ENCODE measurements at regions of chr10 and their contacts with region 1.

Region 1: GRCh38 chr10:51960494-51960895 is 261.1 kb upstream of the CSTF2T start:
- DNase-seq: no peak
- H3K4me3 ChIP-seq: no peak overlapping the region
- H3K27ac ChIP-seq: no peak overlapping the region
- H3K4me1 ChIP-seq: no peaks in the 10 kb centered on the region
- H3K27me3 ChIP-seq: no peaks in the 10 kb centered on the region
- CTCF ChIP-seq: peak; percentile 77

Region 2: GRCh38 chr10:51010977-51011376 is 949.5 kb before region 1 on chr10:
- CTCF ChIA-PET with region 1: no interaction called
- POLR2A ChIA-PET with region 1: interaction called, 13 read pairs
- intact Hi-C with region 1: no loop called
- DNase-seq: no peak
- H3K4me3 ChIP-seq: no peak overlapping the region
- H3K27ac ChIP-seq: no peak overlapping the region
- H3K4me1 ChIP-seq: no peaks in the 10 kb centered on the region
- H3K27me3 ChIP-seq: no peaks in the 10 kb centered on the region
- CTCF ChIP-seq: peak; percentile 92

Region 3: GRCh38 chr10:51389415-51390321 is 570.8 kb before region 1 on chr10:
- CTCF ChIA-PET with region 1: no interaction called
- POLR2A ChIA-PET with region 1: no interaction called
- intact Hi-C with region 1: loop called (anchors 1 kb)
- DNase-seq: peak in 1 of 2 experiments; percentile 11
- H3K4me3 ChIP-seq: no peak overlapping the region
- H3K27ac ChIP-seq: no peak overlapping the region
- H3K4me1 ChIP-seq: no peaks in the 10 kb centered on the region
- H3K27me3 ChIP-seq: no peaks in the 10 kb centered on the region
- CTCF ChIP-seq: peak; percentile 81

Region 4: DNA sequence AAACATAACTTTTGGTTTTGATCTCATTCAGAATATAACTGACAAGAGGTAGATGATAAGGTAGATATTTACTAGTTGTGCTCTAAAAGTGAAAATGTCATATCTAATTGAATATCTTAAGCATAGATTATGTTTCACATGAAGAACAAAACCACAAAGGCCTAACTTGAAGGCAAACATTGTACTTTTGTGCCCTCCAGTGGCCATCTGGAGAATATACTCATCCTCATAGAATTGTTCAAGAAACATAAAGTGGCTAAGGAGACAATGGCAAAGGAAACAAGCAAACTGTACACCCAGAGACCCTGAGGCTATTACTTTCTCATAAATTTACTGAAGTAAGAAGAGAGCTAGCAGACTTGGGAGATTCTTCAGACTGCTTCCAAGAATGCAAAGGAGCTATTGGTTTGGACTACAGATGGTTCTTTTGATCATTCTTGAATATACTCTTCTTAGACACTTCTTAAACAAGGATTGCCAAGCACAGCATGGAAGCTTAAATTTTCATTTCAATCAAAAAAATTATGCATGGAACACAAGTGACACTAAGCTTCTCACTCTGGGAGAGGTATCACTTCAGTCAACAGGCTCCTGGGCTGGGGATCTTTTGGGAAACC is 255.4 kb after region 1 on chr10:
- CTCF ChIA-PET with region 1: no interaction called
- POLR2A ChIA-PET with region 1: no interaction called
- intact Hi-C with region 1: loop called (anchors 5 kb)
- DNase-seq: peak; percentile 41 to 59
- H3K4me3 ChIP-seq: no peak overlapping the region
- H3K27ac ChIP-seq: no peak overlapping the region
- H3K4me1 ChIP-seq: no peaks in the 10 kb centered on the region
- H3K27me3 ChIP-seq: no peaks in the 10 kb centered on the region
- CTCF ChIP-seq: peak; percentile 93